ENCODE measurements at regions of chr6 and their contacts with region 1.

Region 1: DNA sequence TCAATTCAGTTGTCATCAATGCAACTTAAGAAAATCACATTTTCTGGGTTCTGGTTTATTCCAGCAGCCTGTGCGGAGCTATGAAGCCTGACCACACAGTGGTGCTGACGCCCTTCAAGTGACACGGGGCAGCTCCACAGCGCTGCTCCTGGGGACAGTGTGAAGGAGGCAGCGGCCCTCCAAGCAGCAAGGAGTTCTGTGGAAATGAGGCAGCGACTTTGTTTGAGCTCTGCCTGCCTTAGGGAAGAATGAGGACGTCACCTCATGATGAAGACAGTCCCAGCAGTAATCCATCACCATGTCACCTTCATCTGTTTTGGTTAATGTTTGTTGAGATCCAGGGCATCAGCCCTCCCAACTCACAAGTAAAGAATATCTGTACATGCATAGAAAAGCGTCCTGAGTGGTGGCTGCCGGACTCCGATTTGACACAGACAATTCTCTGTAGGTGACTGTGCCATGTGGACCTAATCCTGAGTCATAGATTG is 168.5 kb upstream of the UST start:
- DNase-seq: peak; percentile 88
- ATAC-seq: peak; percentile 100

Region 2: DNA sequence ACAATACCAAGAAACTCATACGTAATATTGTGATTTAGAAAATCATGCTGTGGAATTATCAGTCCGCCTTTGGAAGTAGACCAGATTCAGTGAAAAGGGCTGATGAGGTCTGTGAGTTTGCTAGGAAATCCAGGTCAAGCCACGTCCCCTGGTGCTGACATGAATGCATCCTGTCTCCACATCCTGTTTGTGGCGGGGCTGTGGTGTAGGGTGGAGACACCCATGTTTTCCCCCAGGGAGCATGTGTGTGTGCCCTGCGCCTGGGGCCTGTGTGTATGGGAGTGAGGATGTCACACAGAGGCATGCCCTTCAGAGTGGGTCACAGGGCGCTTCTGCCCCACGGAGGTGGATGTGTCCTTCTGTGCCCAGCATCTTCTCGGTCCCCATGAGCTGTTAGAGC is 126.6 kb before region 1 on chr6:
- intact Hi-C with region 1: no loop called
- DNase-seq: no peak
- ATAC-seq: no peak

Region 3: GRCh38 chr6:148700741-148701311 is 122.5 kb after region 1 on chr6:
- intact Hi-C with region 1: loop called (anchors 10 kb)
- DNase-seq: no peak
- ATAC-seq: peak; percentile 37

Region 4: DNA sequence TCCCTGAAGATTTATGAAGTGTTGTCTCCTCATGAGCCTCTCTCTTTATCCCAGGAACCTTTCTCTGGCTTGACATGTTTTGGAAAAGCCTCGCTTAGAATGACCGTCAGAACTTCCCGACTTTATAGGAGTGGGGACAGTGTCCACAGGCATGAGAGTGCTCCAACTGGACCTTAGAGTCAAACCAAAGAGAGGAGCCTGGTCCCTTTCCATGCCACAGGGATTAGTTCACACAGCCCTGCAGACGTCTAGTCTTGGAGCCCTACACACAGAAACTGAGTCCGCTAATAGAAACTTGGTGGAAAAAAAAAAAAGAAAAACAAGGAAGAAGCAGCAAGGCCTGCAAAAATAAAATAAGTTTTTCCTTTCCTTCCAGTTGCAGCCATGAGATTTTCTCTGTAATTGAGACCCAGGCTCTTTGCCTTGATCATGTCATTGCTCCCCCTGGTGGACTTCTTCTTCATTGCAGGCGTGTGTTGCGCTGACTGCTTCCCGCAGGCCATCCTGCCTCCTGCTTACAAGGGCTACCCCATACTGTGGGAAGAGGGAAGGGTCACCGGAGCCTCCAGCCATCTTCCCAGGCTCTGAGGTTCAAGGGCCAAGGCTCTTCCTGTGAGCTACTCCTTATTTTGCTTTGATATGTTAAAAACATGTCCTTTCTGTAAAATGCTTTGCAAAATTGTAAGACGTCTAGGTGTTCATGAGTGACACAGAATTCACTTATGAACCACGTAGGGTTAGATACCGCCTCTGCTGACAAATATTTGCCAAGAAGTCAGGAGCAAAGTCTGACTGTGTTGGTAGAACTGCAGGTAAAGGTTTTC is 369.5 kb after region 1 on chr6:
- intact Hi-C with region 1: loop called (anchors 2 kb)
- DNase-seq: peak; percentile 78
- ATAC-seq: peak; percentile 87

Region 5: DNA sequence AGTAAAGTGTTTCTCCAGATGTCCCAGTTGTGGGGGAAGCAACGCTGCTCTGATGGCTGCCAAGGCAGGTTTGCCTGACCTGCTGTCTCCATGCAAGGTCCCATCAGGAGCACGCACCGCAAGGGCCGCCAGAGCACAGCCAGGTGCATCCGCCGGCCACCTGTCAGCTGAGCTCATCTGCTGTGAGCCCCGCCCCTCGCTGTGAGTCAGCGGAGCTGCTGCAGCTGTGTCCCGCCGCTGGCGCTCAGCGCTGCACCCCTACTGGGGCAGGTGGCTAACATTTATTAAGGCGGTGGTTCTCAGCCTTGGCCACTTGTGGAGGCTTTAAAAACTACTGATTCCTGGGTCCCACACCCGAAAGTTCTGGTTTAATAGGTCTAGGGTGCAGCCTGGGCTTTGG is 394.2 kb after region 1 on chr6:
- intact Hi-C with region 1: loop called (anchors 5 kb)
- DNase-seq: no peak
- ATAC-seq: no peak